ENCODE measurements at regions of chr20 and their contacts with region 1.

Region 1: GRCh38 chr20:49888345-49888966 is 26.9 kb downstream of the SPATA2 start:
- DNase-seq: peak; percentile 79 to 90 (median 86)
- H3K4me3 ChIP-seq: peak overlapping the region in 8 of 59 donors; percentile 3 to 33 (median 13)
- H3K27ac ChIP-seq: peak overlapping the region; percentile 81 to 100 (median 96)
- H3K27me3 ChIP-seq: no peaks in the 10 kb centered on the region
- CTCF ChIP-seq: peak; percentile 79 to 97 (median 90)

Region 2: GRCh38 chr20:49330544-49331239 is 557.8 kb before region 1 on chr20:
- intact Hi-C with region 1: loop called in 1 of 2 experiments (anchors 5 kb)
- DNase-seq: no peak
- H3K4me3 ChIP-seq: no peak overlapping the region
- H3K27ac ChIP-seq: no peak overlapping the region
- H3K27me3 ChIP-seq: no peaks in the 10 kb centered on the region
- CTCF ChIP-seq: no peak

Region 3: GRCh38 chr20:49713753-49714712 is 174.4 kb before region 1 on chr20 and contains the start of gene B4GALT5:
- intact Hi-C with region 1: loop called in 1 of 2 experiments (anchors 5 kb)
- DNase-seq: peak; percentile 55 to 90 (median 81)
- H3K4me3 ChIP-seq: peak within 1 kb of the TSS; percentile 61 to 98 (median 91)
- H3K27ac ChIP-seq: peak within 1 kb of the TSS; percentile 58 to 96 (median 92)
- H3K27me3 ChIP-seq: no peaks in the 10 kb centered on the region
- CTCF ChIP-seq: no peak
- total RNA-seq, gene B4GALT5: 24.2 to 52.0 (median 37.1) TPM

Region 4: DNA sequence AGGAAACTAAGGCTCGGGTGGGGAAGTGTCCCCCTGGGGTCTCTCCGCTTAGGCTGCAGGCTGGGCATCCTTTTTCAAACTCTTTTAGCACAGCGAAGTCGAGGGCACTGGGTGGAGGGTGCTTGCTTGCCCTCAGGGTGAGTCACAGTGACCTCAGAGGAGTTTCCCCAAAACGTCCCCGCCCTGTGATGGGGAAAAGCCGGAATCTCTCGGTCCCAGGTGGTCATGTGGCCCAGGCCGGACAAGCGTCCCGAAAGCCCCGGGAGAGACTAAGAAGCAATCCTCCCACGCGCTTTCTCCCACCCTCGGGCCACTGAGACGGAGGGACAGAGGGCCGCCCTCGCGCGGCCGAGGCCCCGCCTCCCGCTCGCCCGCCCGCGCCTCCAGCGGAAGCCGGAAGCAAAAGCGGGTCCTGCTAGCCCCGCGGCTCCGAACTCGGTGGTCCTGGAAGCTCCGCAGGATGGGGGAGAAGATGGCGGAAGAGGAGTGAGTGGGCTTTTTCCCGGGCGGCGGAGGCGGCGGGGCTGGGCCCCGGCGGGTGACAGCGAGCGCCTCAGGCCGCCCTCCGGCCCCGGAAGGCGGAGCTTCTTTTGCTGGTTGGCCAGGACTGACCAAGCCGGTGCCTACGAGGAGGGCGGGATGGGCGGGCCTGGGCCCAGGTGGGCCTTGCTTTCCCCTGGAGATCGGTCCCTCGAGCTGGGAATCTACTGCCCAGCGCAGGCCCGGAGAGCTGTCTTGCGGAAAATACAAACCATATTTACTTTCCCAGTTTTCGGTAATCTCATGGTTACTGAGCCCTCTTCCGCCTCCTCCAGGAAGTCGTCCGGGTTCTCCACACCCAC is 75.8 kb before region 1 on chr20 and contains the start of gene SLC9A8:
- intact Hi-C with region 1: loop called in 1 of 2 experiments (anchors 2 kb)
- DNase-seq: peak; percentile 77 to 94 (median 92)
- H3K4me3 ChIP-seq: peak within 1 kb of the TSS; percentile 50 to 99 (median 89)
- H3K27ac ChIP-seq: peak within 1 kb of the TSS; percentile 52 to 97 (median 91)
- H3K27me3 ChIP-seq: no peaks in the 10 kb centered on the region
- CTCF ChIP-seq: peak in 54 of 56 donors; percentile 10 to 75 (median 54)
- total RNA-seq, gene SLC9A8: 8.7 to 21.9 (median 14.9) TPM

Region 5: DNA sequence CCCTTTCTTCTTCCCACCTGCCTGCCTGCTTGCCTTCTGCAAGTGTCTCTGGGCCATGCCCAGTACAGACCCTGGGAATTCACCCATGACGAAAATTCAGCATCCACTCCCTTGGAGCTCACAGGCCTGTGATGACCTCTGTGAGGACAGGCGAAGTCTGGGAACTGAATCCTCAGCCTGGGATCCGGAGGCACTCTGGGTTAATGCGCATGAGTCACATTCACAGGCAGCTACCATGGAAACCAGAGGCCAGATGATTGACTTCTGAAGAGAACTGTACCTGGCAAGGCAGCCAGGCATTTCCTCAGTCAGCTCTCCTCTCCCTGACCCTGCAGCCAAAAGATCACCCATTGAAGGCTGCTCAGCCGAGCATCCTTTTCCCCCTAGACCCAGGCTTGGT is 34.8 kb before region 1 on chr20:
- intact Hi-C with region 1: loop called (anchors 2 to 5 kb)
- DNase-seq: peak in 1 of 10 donors; percentile 64
- H3K4me3 ChIP-seq: no peak overlapping the region
- H3K27ac ChIP-seq: peak overlapping the region in 27 of 59 donors; percentile 3 to 92 (median 61)
- H3K27me3 ChIP-seq: no peaks in the 10 kb centered on the region
- CTCF ChIP-seq: no peak

Region 6: GRCh38 chr20:49909499-49910339 is 21.3 kb after region 1 on chr20:
- intact Hi-C with region 1: loop called in 1 of 2 experiments (anchors 2 kb)
- DNase-seq: peak in 4 of 10 donors; percentile 52 to 68 (median 52)
- H3K4me3 ChIP-seq: peak overlapping the region in 53 of 59 donors; percentile 2 to 100 (median 32)
- H3K27ac ChIP-seq: peak overlapping the region; percentile 60 to 100 (median 100)
- H3K27me3 ChIP-seq: no peaks in the 10 kb centered on the region
- CTCF ChIP-seq: peak in 52 of 56 donors; percentile 12 to 66 (median 50)

Region 7: GRCh38 chr20:49928401-49929141 is 40.1 kb after region 1 on chr20:
- intact Hi-C with region 1: loop called in 1 of 2 experiments (anchors 2 kb)
- DNase-seq: peak; percentile 77 to 92 (median 84)
- H3K4me3 ChIP-seq: peak overlapping the region in 27 of 59 donors; percentile 0 to 51 (median 22)
- H3K27ac ChIP-seq: peak overlapping the region in 55 of 59 donors; percentile 2 to 87 (median 67)
- H3K27me3 ChIP-seq: no peaks in the 10 kb centered on the region
- CTCF ChIP-seq: peak; percentile 87 to 99 (median 95)

Measured in dorsolateral prefrontal cortex (tissue), 120 donors.